ENCODE measurements at regions of chr3 and their contacts with region 1.

Region 1: GRCh38 chr3:163721596-163721995 is 1356.7 kb downstream of the SI start:
- DNase-seq: no peak
- H3K4me3 ChIP-seq: no peak overlapping the region
- H3K27ac ChIP-seq: no peak overlapping the region
- H3K4me1 ChIP-seq: no peaks in the 10 kb centered on the region
- H3K27me3 ChIP-seq: no peaks in the 10 kb centered on the region
- CTCF ChIP-seq: no peak

Region 2: DNA sequence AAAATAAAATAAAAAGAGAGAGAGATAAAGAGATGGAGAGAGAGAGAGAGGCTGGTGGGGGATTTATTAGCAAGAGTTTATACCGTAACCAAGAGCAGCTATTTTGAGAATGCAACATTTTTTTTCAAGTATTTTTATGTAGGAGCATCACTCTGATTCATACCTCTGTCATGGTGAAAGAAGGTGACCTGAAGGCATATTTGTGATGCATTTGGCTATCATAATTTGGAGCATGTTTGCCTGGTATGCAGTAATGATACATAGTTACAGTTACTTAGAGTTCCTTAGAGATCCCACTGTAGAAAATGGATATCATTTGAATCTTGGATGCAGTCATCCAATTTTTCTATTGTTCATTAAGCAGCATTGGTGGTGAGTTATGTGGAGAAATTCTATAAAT is 115.7 kb before region 1 on chr3:
- CTCF ChIA-PET with region 1: no interaction called
- POLR2A ChIA-PET with region 1: no interaction called
- intact Hi-C with region 1: no loop called
- DNase-seq: no peak
- H3K4me3 ChIP-seq: no peak overlapping the region
- H3K27ac ChIP-seq: no peak overlapping the region
- H3K4me1 ChIP-seq: no peaks in the 10 kb centered on the region
- H3K27me3 ChIP-seq: no peaks in the 10 kb centered on the region
- CTCF ChIP-seq: no peak

Region 3: GRCh38 chr3:163753033-163753432 is 31.4 kb after region 1 on chr3:
- CTCF ChIA-PET with region 1: no interaction called
- POLR2A ChIA-PET with region 1: no interaction called
- intact Hi-C with region 1: loop called (anchors 1 kb)
- DNase-seq: no peak
- H3K4me3 ChIP-seq: no peak overlapping the region
- H3K27ac ChIP-seq: no peak overlapping the region
- H3K4me1 ChIP-seq: no peaks in the 10 kb centered on the region
- H3K27me3 ChIP-seq: no peaks in the 10 kb centered on the region
- CTCF ChIP-seq: no peak

Region 4: GRCh38 chr3:164673738-164674137 is 952.1 kb after region 1 on chr3:
- CTCF ChIA-PET with region 1: no interaction called
- POLR2A ChIA-PET with region 1: no interaction called
- intact Hi-C with region 1: no loop called
- DNase-seq: no peak
- H3K4me3 ChIP-seq: no peak overlapping the region
- H3K27ac ChIP-seq: no peak overlapping the region
- H3K4me1 ChIP-seq: no peaks in the 10 kb centered on the region
- H3K27me3 ChIP-seq: no peaks in the 10 kb centered on the region
- CTCF ChIP-seq: peak; percentile 32; the same call in 1 of the 2 replicates